CD4-positive, alpha-beta T cell (primary cell): ENCODE measurements at regions of chr5 and their contacts with region 1.

Region 1: GRCh38 chr5:39202597-39203274 is 16.6 kb downstream of the FYB1 start:
- DNase-seq: peak in 6 of 14 experiments; percentile 35 to 83 (median 68)
- ATAC-seq: peak; percentile 62
- H3K4me3 ChIP-seq: peak overlapping the region; percentile 76
- H3K4me3 Mint-ChIP-seq: peak overlapping the region; percentile 93
- H3K27ac ChIP-seq: peak overlapping the region; percentile 82
- H3K27ac Mint-ChIP-seq: peak overlapping the region; percentile 96
- H3K4me1 ChIP-seq: peaks cover 28% of the 10 kb centered on the region
- H3K4me1 Mint-ChIP-seq: peaks cover 45% of the 10 kb centered on the region
- H3K27me3 ChIP-seq: no peaks in the 10 kb centered on the region
- H3K27me3 Mint-ChIP-seq: no peaks in the 10 kb centered on the region
- CTCF ChIP-seq: no peak

Region 2: DNA sequence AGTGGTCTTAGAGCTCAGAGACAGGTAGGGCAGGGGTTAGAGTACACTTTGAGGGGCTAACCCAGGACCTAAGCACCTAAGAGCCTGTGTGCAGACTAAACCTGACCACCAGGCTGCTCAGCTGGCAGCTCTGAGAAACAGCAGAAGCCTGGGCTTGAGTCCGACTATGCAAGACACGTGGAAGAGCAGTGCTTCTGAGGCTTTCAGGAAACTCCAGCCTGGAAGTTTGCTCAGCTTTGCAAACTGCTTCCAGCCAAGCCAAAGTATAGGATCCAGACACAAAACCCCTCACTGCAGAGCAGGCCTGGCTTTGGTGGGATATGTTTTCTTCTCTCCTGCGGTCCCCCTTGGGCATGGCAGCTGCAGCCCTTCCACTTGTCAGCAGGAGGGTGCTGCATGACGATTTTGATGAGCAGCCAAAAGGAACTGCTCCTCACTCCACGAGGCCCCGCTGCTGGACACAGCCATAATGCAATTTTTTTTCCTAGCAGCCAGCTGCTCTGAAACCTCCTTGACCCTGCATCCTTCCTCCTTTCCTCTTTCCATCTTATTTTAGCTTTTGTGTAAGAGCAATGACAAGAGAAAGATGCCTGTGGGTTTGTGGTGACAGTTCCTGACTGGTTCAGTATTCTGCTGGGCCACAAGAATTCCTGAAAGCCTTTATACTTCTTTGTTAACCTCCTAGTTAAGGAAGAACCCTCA is 769.4 kb before region 1 on chr5:
- CTCF ChIA-PET with region 1: no interaction called
- POLR2A ChIA-PET with region 1: no interaction called
- intact Hi-C with region 1: no loop called
- DNase-seq: no peak
- ATAC-seq: no peak
- H3K4me3 ChIP-seq: no peak overlapping the region
- H3K4me3 Mint-ChIP-seq: no peak overlapping the region
- H3K27ac ChIP-seq: no peak overlapping the region
- H3K27ac Mint-ChIP-seq: no peak overlapping the region
- H3K4me1 ChIP-seq: no peaks in the 10 kb centered on the region
- H3K4me1 Mint-ChIP-seq: no peaks in the 10 kb centered on the region
- H3K27me3 ChIP-seq: peaks cover 11 to 23% of the 10 kb centered on the region in 2 experiments
- H3K27me3 Mint-ChIP-seq: peaks cover 58% of the 10 kb centered on the region
- CTCF ChIP-seq: no peak

Region 3: DNA sequence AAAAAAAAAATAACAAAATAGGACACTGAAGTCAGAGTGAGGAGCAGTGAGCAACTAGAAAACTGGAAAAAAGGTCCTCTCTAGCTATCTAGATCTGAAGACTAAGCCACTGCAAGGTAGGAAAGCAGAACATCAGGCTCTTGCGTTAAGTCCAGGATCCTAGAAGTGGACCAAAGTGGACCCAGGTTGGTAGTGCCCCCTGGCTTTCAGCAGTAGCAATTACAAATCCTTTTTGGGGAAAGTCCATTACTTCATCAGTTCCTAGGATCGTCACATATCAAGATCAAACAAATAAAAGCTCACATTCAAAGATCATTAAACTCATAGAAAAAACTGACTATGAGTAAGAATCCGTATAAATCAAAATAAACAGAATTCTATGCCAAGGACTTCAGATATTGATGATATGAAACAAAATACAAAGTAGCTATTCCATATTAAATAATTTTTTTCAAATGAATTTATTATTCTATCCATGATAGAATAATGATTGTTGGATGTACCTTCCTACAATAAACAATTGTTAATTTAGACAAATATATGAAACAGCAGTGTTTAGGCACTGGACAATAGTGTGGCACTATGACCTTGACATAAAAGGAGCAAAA is 122.0 kb before region 1 on chr5:
- CTCF ChIA-PET with region 1: no interaction called
- POLR2A ChIA-PET with region 1: no interaction called
- intact Hi-C with region 1: no loop called
- DNase-seq: peak in 5 of 14 experiments; percentile 5 to 77 (median 54)
- ATAC-seq: no peak
- H3K4me3 ChIP-seq: no peak overlapping the region
- H3K4me3 Mint-ChIP-seq: no peak overlapping the region
- H3K27ac ChIP-seq: no peak overlapping the region
- H3K27ac Mint-ChIP-seq: no peak overlapping the region
- H3K4me1 ChIP-seq: no peaks in the 10 kb centered on the region
- H3K4me1 Mint-ChIP-seq: peaks cover 19% of the 10 kb centered on the region
- H3K27me3 ChIP-seq: peaks cover 9 to 48% of the 10 kb centered on the region in 2 experiments
- H3K27me3 Mint-ChIP-seq: peaks cover 36% of the 10 kb centered on the region
- CTCF ChIP-seq: peak; percentile 62

Region 4: DNA sequence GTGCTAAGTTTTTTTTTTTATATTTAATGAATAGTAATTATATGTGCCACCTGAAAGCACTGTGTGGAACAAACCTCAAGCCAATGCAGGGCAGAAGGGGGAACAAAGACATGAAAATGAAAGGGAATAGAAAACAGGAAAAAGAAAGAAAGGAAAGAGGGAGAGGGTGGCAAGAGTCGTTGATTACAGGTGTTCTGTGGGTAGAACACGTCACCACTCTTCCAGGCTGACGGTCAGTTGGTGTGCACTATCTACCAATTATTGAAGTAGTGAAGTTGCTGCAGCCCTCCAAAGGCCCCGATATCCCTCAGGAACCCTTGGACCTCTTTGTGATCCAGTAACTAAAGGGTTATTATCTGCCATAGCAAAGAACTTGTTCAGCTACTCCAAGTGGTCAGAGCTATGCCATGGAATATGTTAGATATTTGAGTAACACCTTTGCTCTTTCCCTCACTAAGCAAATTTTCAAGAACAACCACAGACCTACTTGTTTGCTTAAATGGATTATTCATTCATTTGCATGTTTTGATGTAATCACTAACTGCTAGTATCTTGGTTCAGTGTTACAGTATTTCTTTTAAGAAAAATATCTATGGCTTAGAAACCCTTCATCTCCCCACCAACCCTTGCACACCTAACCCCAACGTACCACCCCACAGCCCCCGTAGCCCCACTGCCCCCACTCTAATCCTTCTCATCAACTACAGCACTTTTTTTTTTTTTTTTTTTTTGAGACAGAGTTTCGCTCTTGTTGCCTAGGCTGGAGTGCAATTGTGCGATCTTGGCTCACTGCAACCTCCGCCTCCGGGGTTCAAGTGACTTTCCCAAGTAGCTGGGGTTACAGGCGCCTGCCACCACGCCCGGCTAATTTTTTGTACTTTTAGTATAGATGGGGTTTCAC is 14.7 kb before region 1 on chr5:
- CTCF ChIA-PET with region 1: interaction called, 13 read pairs
- POLR2A ChIA-PET with region 1: interaction called, 209 read pairs
- intact Hi-C with region 1: loop called in 1 of 2 experiments (anchors 2 kb)
- DNase-seq: peak in 6 of 14 experiments; percentile 36 to 63 (median 54)
- ATAC-seq: peak; percentile 37
- H3K4me3 ChIP-seq: peak overlapping the region; percentile 46
- H3K4me3 Mint-ChIP-seq: peak overlapping the region; percentile 91
- H3K27ac ChIP-seq: peak overlapping the region; percentile 67 to 79
- H3K27ac Mint-ChIP-seq: peak overlapping the region; percentile 96
- H3K4me1 ChIP-seq: peaks cover 53% of the 10 kb centered on the region
- H3K4me1 Mint-ChIP-seq: peaks cover 97% of the 10 kb centered on the region
- H3K27me3 ChIP-seq: no peaks in the 10 kb centered on the region
- H3K27me3 Mint-ChIP-seq: no peaks in the 10 kb centered on the region
- CTCF ChIP-seq: no peak